OCI-LY7 (cell line): ENCODE measurements at regions of chr2 and their contacts with region 1.

Region 1: GRCh38 chr2:99864561-99865553 is 277.5 kb downstream of the AFF3 start:
- DNase-seq: no peak
- H3K4me3 ChIP-seq: no peak overlapping the region
- H3K27ac ChIP-seq: no peak overlapping the region
- H3K4me1 ChIP-seq: peaks cover 68% of the 10 kb centered on the region
- CTCF ChIP-seq: no peak

Region 2: GRCh38 chr2:98875081-98875728 is 989.7 kb before region 1 on chr2:
- CTCF ChIA-PET with region 1: no interaction called
- POLR2A ChIA-PET with region 1: no interaction called
- intact Hi-C with region 1: no loop called
- DNase-seq: no peak
- H3K4me3 ChIP-seq: no peak overlapping the region
- H3K27ac ChIP-seq: no peak overlapping the region
- H3K4me1 ChIP-seq: no peaks in the 10 kb centered on the region
- CTCF ChIP-seq: no peak

Region 3: DNA sequence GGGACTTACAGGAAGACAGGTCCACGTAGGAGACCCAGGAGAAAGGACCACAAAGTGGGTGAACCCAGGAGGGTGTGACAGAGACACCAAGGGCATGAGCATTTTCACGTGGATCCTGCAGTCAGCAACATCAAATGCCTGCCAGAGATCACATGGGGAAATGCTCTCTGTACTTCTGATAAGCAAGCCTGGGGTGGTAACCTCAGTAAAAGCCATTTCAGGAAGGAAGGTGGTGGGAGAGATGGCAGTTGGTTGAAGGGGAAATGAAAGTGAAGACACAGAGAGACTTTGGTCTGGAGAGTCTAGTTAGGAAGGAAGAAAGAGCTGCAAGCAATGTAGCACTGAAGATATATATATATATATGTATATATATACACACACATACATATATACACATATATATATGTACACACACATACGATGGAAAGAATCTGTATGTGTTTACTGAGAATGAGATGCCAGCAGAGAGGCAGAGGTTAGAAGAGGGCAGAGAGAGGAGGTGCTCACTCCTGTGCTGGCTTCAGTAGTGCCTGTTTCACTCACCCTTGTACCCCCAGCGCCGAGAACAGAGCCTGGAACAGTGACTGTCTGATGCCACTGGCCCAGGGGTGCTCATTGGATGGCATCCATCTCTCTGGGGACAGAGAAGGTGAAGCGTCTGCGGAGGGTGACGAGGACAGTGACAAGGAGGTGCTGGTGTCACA is 37.4 kb before region 1 on chr2:
- CTCF ChIA-PET with region 1: no interaction called
- POLR2A ChIA-PET with region 1: no interaction called
- intact Hi-C with region 1: loop called (anchors 2 kb)
- DNase-seq: peak; percentile 83
- H3K4me3 ChIP-seq: peak overlapping the region; percentile 44
- H3K27ac ChIP-seq: peak overlapping the region; percentile 87
- H3K4me1 ChIP-seq: peaks cover 29% of the 10 kb centered on the region
- CTCF ChIP-seq: no peak